HepG2 (cell line): ENCODE measurements at regions of chr7 and their contacts with region 1.

Region 1: GRCh38 chr7:7424151-7424873 is 111.4 kb downstream of the COL28A1 start:
- DNase-seq: peak; percentile 58
- ATAC-seq: peak; percentile 95
- H3K4me3 ChIP-seq: peak overlapping the region in 2 of 3 experiments; percentile 5 to 25; a peak in 2 of 6 replicates
- H3K27ac ChIP-seq: no peak overlapping the region
- H3K4me1 ChIP-seq: no peaks in the 10 kb centered on the region
- H3K27me3 ChIP-seq: no peaks in the 10 kb centered on the region
- CTCF ChIP-seq: peak; percentile 89
- EP300 ChIP-seq: no peak
- POLR2A ChIP-seq: no peak
- RAD21 ChIP-seq: peak; percentile 91

Region 2: DNA sequence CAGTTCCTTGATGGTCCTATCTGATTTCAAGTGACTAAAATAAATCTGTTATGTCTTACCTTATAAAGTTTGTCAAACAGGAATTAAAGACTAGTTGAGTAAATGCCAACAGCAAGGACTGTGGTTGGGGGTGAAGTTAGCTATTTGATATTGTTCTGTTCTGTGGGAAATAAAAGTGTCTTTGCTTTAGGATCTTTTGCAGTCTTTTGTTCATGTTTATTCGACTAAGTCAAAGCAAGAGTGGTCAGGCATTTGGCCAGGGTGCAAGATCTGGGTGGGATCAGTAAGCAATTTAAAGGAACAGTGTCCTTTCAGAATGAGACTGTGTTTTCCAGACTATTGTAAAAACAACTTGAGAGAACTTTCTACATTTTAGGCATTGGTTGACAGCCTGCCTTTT is 111.4 kb after region 1 on chr7 and contains the start of gene COL28A1:
- CTCF ChIA-PET with region 1: interaction called, 37 read pairs
- POLR2A ChIA-PET with region 1: no interaction called
- in situ Hi-C with region 1: loop called (anchors 5 kb)
- intact Hi-C with region 1: loop called (anchors 1 kb)
- DNase-seq: no peak
- ATAC-seq: no peak
- H3K4me3 ChIP-seq: no peak within 1 kb of the TSS
- H3K27ac ChIP-seq: no peak within 1 kb of the TSS
- H3K4me1 ChIP-seq: no peaks in the 10 kb centered on the region
- H3K27me3 ChIP-seq: no peaks in the 10 kb centered on the region
- CTCF ChIP-seq: no peak
- EP300 ChIP-seq: no peak
- POLR2A ChIP-seq: no peak
- RAD21 ChIP-seq: no peak
- total RNA-seq, gene COL28A1: 0.07 TPM in 1 of 2 replicates, not detected in the other

Region 3: DNA sequence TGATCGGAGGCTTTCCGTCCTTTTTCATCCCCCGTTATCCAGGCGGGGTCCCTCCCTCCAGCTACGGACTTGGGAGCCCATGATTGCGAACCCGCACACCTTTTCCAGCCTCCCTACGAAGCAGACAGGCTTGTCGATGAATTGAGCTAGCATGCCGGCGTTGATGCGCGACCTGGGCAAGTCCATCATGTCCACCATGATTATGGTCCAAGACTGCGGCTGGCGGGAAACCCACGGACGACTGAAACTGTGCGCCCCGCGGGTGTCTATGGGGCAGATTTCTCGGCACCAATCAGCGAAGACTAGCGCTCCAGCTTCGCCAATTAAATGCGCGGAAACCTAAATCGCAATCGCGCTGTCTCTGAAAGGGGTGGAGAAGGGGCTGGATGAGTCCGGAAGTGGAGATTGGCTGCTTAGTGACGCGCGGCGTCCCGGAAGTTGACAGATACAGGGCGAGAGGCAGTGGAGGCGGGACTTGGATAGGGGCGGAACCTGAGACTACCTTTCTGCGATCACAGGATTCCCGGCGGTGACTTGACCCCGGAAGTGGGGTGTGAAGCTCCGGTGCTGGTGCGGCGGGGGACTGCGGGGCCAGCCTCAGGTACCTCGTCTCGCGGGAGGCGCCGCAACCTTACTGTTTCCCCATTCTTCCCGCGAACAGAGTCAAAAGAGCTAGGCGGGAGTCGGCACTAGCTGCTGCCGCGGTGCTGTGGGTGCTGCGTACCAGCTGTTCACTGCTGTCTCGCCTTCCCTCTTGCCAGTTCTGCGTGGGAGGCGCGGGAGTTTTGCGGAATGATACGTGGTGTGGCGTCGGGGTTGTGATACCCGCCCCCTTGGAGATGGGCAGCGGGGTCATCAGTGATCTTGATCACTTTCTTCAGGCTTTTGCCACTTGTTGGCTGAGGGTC is 216.2 kb after region 1 on chr7 and contains the start of gene UMAD1:
- CTCF ChIA-PET with region 1: no interaction called
- POLR2A ChIA-PET with region 1: no interaction called
- in situ Hi-C with region 1: no loop called
- intact Hi-C with region 1: loop called (anchors 10 kb)
- DNase-seq: peak; percentile 99
- ATAC-seq: peak; percentile 98
- H3K4me3 ChIP-seq: peak within 1 kb of the TSS; percentile 88 to 95 (median 94)
- H3K27ac ChIP-seq: peak within 1 kb of the TSS; percentile 82
- H3K4me1 ChIP-seq: peaks cover 35% of the 10 kb centered on the region
- H3K27me3 ChIP-seq: no peaks in the 10 kb centered on the region; a peak in 1 of 5 replicates
- CTCF ChIP-seq: peak; percentile 24
- EP300 ChIP-seq: 0 out of 4 replicates have a peak, but pooled peaks of 1 of the 2 experiments have one; percentile 7
- POLR2A ChIP-seq: peak; percentile 71 to 76
- RAD21 ChIP-seq: no peak
- total RNA-seq, gene UMAD1: 17.6 and 26.4 TPM in 2 replicates

Region 4: DNA sequence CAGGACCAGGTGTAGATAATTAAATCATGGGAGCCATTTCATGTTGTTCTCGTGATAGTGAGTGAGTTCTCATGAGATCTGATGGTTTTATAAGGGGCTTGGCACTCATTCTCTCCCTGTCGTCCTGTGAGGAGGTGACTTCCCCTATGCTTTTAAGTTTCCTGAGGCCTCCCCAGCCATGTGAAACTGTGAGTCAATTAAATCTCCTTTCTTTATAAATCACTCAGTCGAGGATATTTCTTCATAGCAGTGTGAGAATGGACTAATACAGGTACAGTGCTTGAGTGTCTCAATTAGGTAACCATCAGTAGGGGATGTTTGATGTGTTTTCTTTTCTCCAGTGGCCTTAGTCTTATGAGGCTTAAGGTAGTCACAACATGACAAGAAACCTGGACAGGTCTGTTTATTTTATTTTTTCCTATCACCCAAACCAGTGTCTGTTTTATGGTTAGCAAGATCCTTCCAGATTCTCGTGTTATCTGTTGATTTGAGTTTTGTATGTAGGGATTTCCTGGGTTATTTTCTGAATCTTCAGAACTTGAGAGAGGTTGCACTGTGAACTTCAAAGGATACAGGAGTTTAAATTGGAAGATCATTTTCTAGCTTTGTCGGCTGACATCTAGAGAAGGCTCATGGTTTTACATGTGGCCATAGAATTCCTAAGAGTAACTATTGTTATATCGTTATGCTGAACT is 248.4 kb after region 1 on chr7:
- CTCF ChIA-PET with region 1: no interaction called
- POLR2A ChIA-PET with region 1: no interaction called
- in situ Hi-C with region 1: no loop called
- intact Hi-C with region 1: no loop called
- DNase-seq: no peak
- ATAC-seq: no peak
- H3K4me3 ChIP-seq: no peak overlapping the region
- H3K27ac ChIP-seq: no peak overlapping the region
- H3K4me1 ChIP-seq: no peaks in the 10 kb centered on the region
- H3K27me3 ChIP-seq: no peaks in the 10 kb centered on the region
- CTCF ChIP-seq: no peak
- EP300 ChIP-seq: no peak
- POLR2A ChIP-seq: no peak
- RAD21 ChIP-seq: no peak

Region 5: GRCh38 chr7:7739204-7740036 is 315.1 kb after region 1 on chr7:
- CTCF ChIA-PET with region 1: no interaction called
- POLR2A ChIA-PET with region 1: no interaction called
- in situ Hi-C with region 1: no loop called
- intact Hi-C with region 1: no loop called
- DNase-seq: no peak
- ATAC-seq: no peak
- H3K4me3 ChIP-seq: no peak overlapping the region
- H3K27ac ChIP-seq: no peak overlapping the region
- H3K4me1 ChIP-seq: peaks cover 26% of the 10 kb centered on the region
- H3K27me3 ChIP-seq: no peaks in the 10 kb centered on the region; a peak in 1 of 5 replicates
- CTCF ChIP-seq: no peak
- EP300 ChIP-seq: peak in 1 of 2 experiments; percentile 31; a peak in 1 of 4 replicates
- POLR2A ChIP-seq: no peak
- RAD21 ChIP-seq: no peak

Region 6: DNA sequence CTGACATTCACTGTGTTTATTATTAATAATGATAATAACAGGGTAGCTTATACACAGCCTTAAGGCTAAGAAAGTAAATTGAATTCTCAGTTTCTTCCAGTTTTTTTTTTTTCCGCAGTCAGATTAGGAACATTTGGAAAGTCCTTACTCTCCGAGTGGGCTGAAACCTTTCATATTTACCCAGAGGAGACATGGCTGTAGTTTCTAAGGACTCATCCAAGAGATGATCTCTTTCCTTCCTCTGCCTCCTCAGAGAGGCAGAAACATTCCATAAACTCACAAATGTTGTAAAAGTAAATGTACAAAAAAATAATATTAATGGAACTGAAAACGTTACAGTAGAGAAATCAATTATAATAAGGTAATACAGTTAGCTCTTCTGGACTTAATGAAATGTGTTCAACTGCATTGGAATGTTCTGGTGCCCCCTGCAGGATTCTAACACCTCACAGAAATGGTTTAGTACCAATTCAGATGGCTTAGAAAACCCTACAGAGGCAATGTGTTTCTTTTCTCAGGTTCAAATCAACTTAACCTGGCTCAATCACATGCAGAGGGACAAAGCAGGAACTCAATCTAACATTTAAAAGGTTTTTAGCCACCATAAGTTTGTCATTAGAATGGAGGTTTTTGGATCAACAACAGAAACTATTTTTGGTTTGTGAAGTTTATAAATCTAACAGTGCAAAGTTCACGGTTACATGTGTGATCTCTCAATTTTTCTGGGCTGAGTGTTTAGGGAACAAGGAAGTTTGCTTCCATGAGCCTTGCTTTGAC is 766.0 kb after region 1 on chr7:
- CTCF ChIA-PET with region 1: no interaction called
- POLR2A ChIA-PET with region 1: no interaction called
- in situ Hi-C with region 1: no loop called
- intact Hi-C with region 1: loop called (anchors 1 kb)
- DNase-seq: peak; percentile 44
- ATAC-seq: peak; percentile 85
- H3K4me3 ChIP-seq: no peak overlapping the region
- H3K27ac ChIP-seq: no peak overlapping the region
- H3K4me1 ChIP-seq: no peaks in the 10 kb centered on the region; the same call in 1 of the 2 replicates
- H3K27me3 ChIP-seq: no peaks in the 10 kb centered on the region
- CTCF ChIP-seq: peak; percentile 73
- EP300 ChIP-seq: no peak
- POLR2A ChIP-seq: no peak
- RAD21 ChIP-seq: no peak